AG04450 (cell line): ENCODE measurements at regions of chr12 and their contacts with region 1.

Region 1: DNA sequence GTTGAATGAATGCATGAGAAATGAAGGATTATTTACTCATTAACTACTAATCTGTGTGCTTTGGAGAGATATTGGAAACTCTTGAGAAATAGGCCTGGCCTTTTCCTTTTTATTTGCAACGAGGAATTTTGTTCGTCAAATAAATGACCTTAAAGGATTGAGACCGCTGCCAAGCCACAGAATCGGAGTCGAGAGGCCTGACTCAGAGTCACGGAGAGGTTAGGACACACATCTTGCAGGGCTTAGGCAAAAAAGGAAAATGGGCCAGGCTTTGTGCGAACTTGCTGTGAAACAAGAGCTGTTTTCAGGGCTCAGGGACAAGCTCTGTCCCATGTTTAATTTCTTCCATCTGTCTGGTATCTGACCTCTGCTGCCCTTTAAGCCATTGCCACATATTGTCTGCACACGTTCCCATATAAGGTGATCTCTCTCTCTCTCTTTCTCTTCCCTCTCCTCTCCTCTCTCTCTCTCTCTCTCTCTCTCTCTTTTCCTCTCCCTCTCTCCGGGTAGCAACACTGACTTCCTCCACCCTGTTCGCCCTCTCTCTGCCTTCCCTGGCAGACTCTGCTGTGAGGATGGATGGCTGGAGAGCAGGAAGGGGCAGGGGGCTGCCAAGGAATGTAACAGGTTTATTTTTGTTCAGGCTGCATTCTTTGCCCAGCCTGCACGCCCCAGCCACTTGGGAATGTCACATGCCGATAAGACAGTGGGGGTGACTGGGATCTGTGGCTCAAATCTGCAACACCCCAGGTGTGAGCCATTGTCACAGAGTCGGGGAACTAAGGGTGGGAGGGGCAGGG is 14.9 kb upstream of the IFT81 start:
- DNase-seq: peak; percentile 97
- H3K4me3 ChIP-seq: peak overlapping the region; percentile 37
- H3K27ac ChIP-seq: peak overlapping the region; percentile 98
- H3K27me3 ChIP-seq: no peaks in the 10 kb centered on the region
- CTCF ChIP-seq: no peak

Region 2: GRCh38 chr12:110093631-110094311 is 15.5 kb before region 1 on chr12:
- CTCF ChIA-PET with region 1: no interaction called
- POLR2A ChIA-PET with region 1: no interaction called
- DNase-seq: no peak
- H3K4me3 ChIP-seq: no peak overlapping the region
- H3K27ac ChIP-seq: no peak overlapping the region
- H3K27me3 ChIP-seq: peaks cover 13% of the 10 kb centered on the region
- CTCF ChIP-seq: no peak

Region 3: GRCh38 chr12:110124184-110124995 is 15.2 kb after region 1 on chr12 and contains the start of gene IFT81:
- CTCF ChIA-PET with region 1: no interaction called
- POLR2A ChIA-PET with region 1: interaction called, 11 read pairs
- DNase-seq: peak; percentile 78
- H3K4me3 ChIP-seq: peak within 1 kb of the TSS; percentile 95
- H3K27ac ChIP-seq: peak within 1 kb of the TSS; percentile 82
- H3K27me3 ChIP-seq: no peaks in the 10 kb centered on the region
- CTCF ChIP-seq: no peak
- polyA plus RNA-seq, gene IFT81: 13.3 and 22.1 TPM in 2 replicates